ENCODE measurements at regions of chr6 and their contacts with region 1.

Region 1: GRCh38 chr6:119742188-119742803 is 392.7 kb upstream of the MAN1A1 start:
- DNase-seq: no peak
- ATAC-seq: peak; percentile 98
- H3K4me3 ChIP-seq: no peak overlapping the region
- H3K27ac ChIP-seq: no peak overlapping the region
- H3K4me1 ChIP-seq: no peaks in the 10 kb centered on the region
- H3K27me3 ChIP-seq: no peaks in the 10 kb centered on the region; a peak in 1 of 4 replicates
- CTCF ChIP-seq: peak; percentile 82 to 85 (median 84)
- EP300 ChIP-seq: no peak
- POLR2A ChIP-seq: no peak
- RAD21 ChIP-seq: peak; percentile 93

Region 2: DNA sequence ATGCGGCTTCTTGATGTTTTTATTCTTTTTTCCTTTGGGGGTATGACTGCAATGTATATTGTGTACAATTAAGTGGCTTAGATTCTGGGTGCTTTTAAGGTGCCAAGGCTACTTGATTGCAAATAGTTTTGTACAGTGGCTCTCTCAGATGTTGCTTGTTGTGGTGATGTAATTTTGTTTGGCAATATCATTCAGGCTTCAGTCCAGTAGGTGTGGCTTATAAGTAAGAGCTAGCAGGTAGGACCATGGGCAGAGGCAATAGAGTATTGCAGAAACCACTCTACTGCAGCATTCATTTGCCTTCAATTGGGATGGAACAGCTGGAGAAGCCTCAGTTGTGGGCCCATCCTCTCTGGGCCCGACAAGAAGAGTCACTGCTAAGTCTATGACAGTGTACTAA is 15.2 kb after region 1 on chr6:
- CTCF ChIA-PET with region 1: interaction called, 10 read pairs
- POLR2A ChIA-PET with region 1: no interaction called
- RAD21 ChIA-PET with region 1: no interaction called
- SMC1A ChIA-PET with region 1: interaction called, 4 read pairs
- in situ Hi-C with region 1: no loop called
- intact Hi-C with region 1: no loop called
- DNase-seq: no peak
- ATAC-seq: no peak
- H3K4me3 ChIP-seq: no peak overlapping the region
- H3K27ac ChIP-seq: no peak overlapping the region
- H3K4me1 ChIP-seq: no peaks in the 10 kb centered on the region
- H3K27me3 ChIP-seq: no peaks in the 10 kb centered on the region
- CTCF ChIP-seq: no peak
- EP300 ChIP-seq: no peak
- POLR2A ChIP-seq: no peak
- RAD21 ChIP-seq: no peak

Region 3: GRCh38 chr6:120056085-120056484 is 313.8 kb after region 1 on chr6:
- CTCF ChIA-PET with region 1: no interaction called
- POLR2A ChIA-PET with region 1: no interaction called
- RAD21 ChIA-PET with region 1: no interaction called
- SMC1A ChIA-PET with region 1: interaction called, 3 read pairs
- in situ Hi-C with region 1: no loop called
- intact Hi-C with region 1: loop called (anchors 5 kb)
- DNase-seq: no peak
- ATAC-seq: peak; percentile 75
- H3K4me3 ChIP-seq: no peak overlapping the region
- H3K27ac ChIP-seq: no peak overlapping the region
- H3K4me1 ChIP-seq: no peaks in the 10 kb centered on the region
- H3K27me3 ChIP-seq: no peaks in the 10 kb centered on the region
- CTCF ChIP-seq: peak; percentile 42 to 73 (median 63)
- EP300 ChIP-seq: no peak
- POLR2A ChIP-seq: no peak
- RAD21 ChIP-seq: peak; percentile 49

Region 4: GRCh38 chr6:120274547-120274946 is 532.3 kb after region 1 on chr6:
- CTCF ChIA-PET with region 1: no interaction called
- POLR2A ChIA-PET with region 1: no interaction called
- RAD21 ChIA-PET with region 1: no interaction called
- SMC1A ChIA-PET with region 1: no interaction called
- in situ Hi-C with region 1: no loop called
- intact Hi-C with region 1: loop called (anchors 10 kb)
- DNase-seq: peak; percentile 9
- ATAC-seq: peak; percentile 89
- H3K4me3 ChIP-seq: no peak overlapping the region
- H3K27ac ChIP-seq: no peak overlapping the region
- H3K4me1 ChIP-seq: no peaks in the 10 kb centered on the region
- H3K27me3 ChIP-seq: no peaks in the 10 kb centered on the region
- CTCF ChIP-seq: peak in 2 of 3 experiments; percentile 6 to 13; a peak in 2 of 6 replicates
- EP300 ChIP-seq: no peak
- POLR2A ChIP-seq: no peak
- RAD21 ChIP-seq: peak; percentile 19; the same call in 1 of the 2 replicates

Region 5: DNA sequence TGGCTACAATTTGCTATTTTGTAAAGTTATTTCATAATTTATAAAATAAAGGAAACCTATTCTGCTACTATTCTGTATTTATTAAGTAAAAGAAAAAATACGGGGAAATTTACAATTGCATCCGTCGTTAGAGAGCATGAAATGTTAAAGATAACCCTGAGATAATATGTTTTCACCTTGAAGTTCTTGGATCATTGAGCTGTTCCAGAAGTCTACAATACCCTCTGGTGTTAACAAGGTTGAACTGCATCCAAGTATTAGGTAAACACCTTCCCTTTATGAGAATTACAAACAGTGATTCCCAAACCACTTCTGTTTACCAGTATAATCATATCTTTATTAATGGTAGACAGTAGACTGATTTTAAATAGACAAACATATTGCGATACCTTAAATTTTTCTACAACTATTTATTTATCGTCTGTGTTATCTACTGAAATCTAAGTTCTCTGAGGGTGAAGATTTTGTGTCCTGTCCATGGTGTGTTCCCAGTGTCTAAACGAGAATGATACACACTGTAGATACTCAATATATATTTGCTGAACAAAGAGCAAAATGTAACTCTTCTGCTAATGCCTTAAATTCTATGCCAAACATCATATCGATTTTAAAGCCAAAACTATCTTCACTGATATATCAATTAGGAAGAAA is 1563.8 kb after region 1 on chr6:
- CTCF ChIA-PET with region 1: no interaction called
- POLR2A ChIA-PET with region 1: no interaction called
- RAD21 ChIA-PET with region 1: no interaction called
- SMC1A ChIA-PET with region 1: interaction called, 3 read pairs
- in situ Hi-C with region 1: no loop called
- intact Hi-C with region 1: loop called (anchors 5 kb)
- DNase-seq: no peak
- ATAC-seq: peak; percentile 81
- H3K4me3 ChIP-seq: no peak overlapping the region
- H3K27ac ChIP-seq: no peak overlapping the region
- H3K4me1 ChIP-seq: no peaks in the 10 kb centered on the region
- H3K27me3 ChIP-seq: no peaks in the 10 kb centered on the region
- CTCF ChIP-seq: peak; percentile 60 to 66 (median 62); a peak in 5 of 6 replicates
- EP300 ChIP-seq: no peak
- POLR2A ChIP-seq: no peak
- RAD21 ChIP-seq: peak; percentile 88